GM12878 (cell line): ENCODE measurements at regions of chr11 and their contacts with region 1.

Region 1: DNA sequence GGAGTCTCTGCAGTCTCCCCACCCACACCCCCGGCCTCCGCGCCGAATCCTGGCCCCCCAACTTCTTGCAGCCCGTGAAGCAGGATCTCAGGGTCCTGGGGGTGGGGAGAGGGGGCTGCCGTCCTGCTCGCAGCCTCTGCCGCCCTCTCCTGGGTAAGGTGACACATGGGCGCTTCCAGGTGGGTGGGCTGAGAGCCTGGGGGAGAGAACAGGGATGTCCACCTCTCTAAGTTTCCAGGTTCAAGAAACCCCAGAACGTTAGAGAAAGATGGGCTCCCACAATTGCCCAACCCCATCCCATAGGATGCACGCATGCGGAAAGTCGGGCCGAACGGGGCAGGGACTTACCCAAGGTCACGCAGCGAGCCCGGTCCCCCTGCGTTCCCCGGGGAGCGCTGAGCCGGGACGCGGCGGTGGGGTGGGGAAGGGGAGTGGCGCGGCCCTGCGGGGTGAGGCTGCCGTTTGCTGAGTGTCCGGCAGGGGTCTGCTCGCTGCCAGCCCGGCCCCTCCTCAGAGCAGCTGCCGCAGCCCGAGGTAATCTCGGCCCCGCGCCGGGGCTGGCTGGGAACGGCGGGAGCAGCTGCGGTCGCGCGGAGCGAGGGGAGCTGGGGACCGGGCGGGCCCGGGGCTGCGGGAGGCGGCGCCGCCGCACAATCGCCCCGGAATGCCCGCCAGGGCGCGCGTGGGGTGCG is 705 bp upstream of the CAPN1 start:
- DNase-seq: peak; percentile 19
- ATAC-seq: peak; percentile 88
- H3K4me3 ChIP-seq: peak overlapping the region; percentile 100
- H3K27ac ChIP-seq: peak overlapping the region; percentile 93
- H3K4me1 ChIP-seq: peaks cover 6% of the 10 kb centered on the region; the same call in 1 of the 2 replicates
- H3K27me3 ChIP-seq: no peaks in the 10 kb centered on the region
- CTCF ChIP-seq: peak; percentile 66 to 83 (median 72)
- EP300 ChIP-seq: no peak
- POLR2A ChIP-seq: no peak
- RAD21 ChIP-seq: peak; percentile 87

Region 2: DNA sequence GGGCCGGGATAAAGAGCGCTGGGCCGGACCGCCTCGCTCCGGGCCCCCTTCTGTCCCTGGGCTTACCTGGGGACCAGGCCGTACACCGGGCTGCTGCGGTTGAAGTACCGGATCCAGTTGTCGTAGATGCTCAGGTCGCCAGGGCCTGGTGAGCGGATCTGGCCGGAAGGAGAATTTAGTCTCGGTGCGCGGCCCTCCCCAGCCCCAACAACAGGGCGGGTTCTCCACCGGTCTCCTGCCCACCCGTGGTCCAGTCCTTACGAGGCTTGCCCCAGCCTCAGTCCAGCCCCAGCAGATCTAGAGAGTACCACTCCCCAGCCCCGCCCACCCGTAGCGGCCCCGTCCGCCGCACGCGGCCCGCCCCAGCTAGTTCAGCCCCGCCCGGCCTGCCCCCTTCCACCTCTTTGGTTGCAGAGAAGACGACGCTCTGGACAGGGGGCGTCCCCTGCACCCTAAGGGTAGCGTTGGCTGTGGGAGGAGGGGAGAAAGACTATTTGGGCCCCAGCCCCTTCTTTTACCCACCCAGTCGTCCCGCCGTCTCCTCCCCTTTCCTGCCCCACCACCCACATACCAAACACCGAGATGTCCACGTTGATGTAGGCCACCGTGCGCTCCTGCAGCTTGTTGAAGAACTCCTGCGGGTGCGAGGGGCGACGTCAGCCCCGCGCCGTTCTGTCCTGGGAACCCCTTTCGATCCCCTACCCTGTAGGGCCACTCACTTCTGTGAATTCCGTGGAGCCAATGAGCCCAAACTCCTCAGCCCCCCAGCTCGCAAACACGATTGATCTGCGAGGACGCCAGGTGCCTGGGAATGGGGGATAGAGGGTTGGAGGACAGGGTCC is 133.2 kb before region 1 on chr11:
- CTCF ChIA-PET with region 1: no interaction called
- POLR2A ChIA-PET with region 1: no interaction called
- RAD21 ChIA-PET with region 1: no interaction called
- SMC1A ChIA-PET with region 1: no interaction called
- in situ Hi-C with region 1: no loop called
- intact Hi-C with region 1: no loop called
- DNase-seq: no peak
- ATAC-seq: no peak
- H3K4me3 ChIP-seq: no peak overlapping the region
- H3K27ac ChIP-seq: no peak overlapping the region
- H3K4me1 ChIP-seq: peaks cover 11% of the 10 kb centered on the region
- H3K27me3 ChIP-seq: no peaks in the 10 kb centered on the region
- CTCF ChIP-seq: no peak
- EP300 ChIP-seq: no peak
- POLR2A ChIP-seq: no peak
- RAD21 ChIP-seq: no peak

Region 3: GRCh38 chr11:65134386-65135253 is 46.4 kb before region 1 on chr11 and contains the start of gene SYVN1:
- CTCF ChIA-PET with region 1: interaction called, 35 read pairs
- POLR2A ChIA-PET with region 1: interaction called, 8 read pairs
- RAD21 ChIA-PET with region 1: interaction called, 25 read pairs
- SMC1A ChIA-PET with region 1: interaction called, 6 read pairs
- in situ Hi-C with region 1: no loop called
- intact Hi-C with region 1: loop called (anchors 5 kb)
- DNase-seq: peak; percentile 89
- ATAC-seq: peak; percentile 91
- H3K4me3 ChIP-seq: peak within 1 kb of the TSS; percentile 99
- H3K27ac ChIP-seq: peak within 1 kb of the TSS; percentile 99
- H3K4me1 ChIP-seq: peaks cover 21% of the 10 kb centered on the region
- H3K27me3 ChIP-seq: no peaks in the 10 kb centered on the region
- CTCF ChIP-seq: 0 out of 6 replicates have a peak, but pooled peaks of 1 of the 3 experiments have one; percentile 1
- EP300 ChIP-seq: 0 out of 4 replicates have a peak, but pooled peaks of 1 of the 2 experiments have one; percentile 35
- POLR2A ChIP-seq: peak; percentile 97
- RAD21 ChIP-seq: no peak
- polyA plus RNA-seq, gene SYVN1: 0.79 to 2.6 TPM

Region 4: GRCh38 chr11:65194564-65194963 is 13.5 kb after region 1 on chr11:
- CTCF ChIA-PET with region 1: interaction called, 10 read pairs
- POLR2A ChIA-PET with region 1: no interaction called
- RAD21 ChIA-PET with region 1: no interaction called
- SMC1A ChIA-PET with region 1: interaction called, 4 read pairs
- in situ Hi-C with region 1: no loop called
- intact Hi-C with region 1: no loop called
- DNase-seq: no peak
- ATAC-seq: no peak
- H3K4me3 ChIP-seq: no peak overlapping the region
- H3K27ac ChIP-seq: no peak overlapping the region
- H3K4me1 ChIP-seq: no peaks in the 10 kb centered on the region
- H3K27me3 ChIP-seq: no peaks in the 10 kb centered on the region
- CTCF ChIP-seq: no peak
- EP300 ChIP-seq: no peak
- POLR2A ChIP-seq: no peak
- RAD21 ChIP-seq: no peak

Region 5: DNA sequence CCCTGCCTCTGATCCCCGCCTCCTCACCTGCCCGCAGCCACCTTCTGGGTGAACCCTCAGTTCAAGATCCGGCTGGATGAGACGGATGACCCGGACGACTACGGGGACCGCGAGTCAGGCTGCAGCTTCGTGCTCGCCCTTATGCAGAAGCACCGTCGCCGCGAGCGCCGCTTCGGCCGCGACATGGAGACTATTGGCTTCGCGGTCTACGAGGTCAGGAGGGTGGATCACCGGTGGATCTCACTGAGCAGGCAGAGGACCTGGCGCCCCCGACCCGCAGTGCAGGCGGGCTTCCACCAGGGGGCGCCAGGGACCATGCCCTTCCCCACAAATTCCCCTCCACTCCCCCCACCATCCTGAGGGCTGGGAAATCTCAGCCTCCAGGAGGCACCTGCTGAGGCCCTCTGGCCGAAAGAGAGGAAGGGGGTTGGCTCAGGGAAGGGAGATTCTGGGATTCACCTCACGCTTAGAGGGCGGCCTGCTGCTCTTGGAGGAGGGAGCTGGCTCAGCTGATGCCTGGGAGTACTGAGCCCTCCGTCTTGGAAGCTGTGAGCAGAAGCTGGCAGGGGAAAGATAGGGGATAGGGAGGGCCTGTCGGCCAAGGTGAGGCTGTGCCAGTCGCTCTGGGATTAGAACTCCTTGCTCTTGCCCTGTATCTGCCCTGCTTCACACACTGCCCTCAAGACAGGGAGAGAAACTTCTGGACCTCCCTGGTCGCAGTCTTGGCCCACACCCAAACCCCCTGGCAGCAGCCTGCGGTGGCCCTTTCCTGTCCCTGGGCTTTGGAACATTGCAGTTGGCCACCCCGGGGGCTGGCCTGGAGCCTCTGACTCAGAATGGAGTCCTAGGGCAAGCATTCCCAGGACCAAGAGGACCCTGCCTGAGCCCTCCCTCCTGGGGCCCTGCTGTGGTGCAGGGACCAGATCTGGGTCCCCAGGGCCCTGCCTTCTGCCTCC is 23.9 kb after region 1 on chr11:
- CTCF ChIA-PET with region 1: no interaction called
- POLR2A ChIA-PET with region 1: no interaction called
- RAD21 ChIA-PET with region 1: no interaction called
- SMC1A ChIA-PET with region 1: no interaction called
- in situ Hi-C with region 1: no loop called
- intact Hi-C with region 1: no loop called
- DNase-seq: no peak
- ATAC-seq: peak; percentile 90
- H3K4me3 ChIP-seq: no peak overlapping the region
- H3K27ac ChIP-seq: no peak overlapping the region
- H3K4me1 ChIP-seq: no peaks in the 10 kb centered on the region
- H3K27me3 ChIP-seq: no peaks in the 10 kb centered on the region
- CTCF ChIP-seq: peak; percentile 73 to 96 (median 81)
- EP300 ChIP-seq: no peak
- POLR2A ChIP-seq: no peak; the same call in 1 of the 2 replicates
- RAD21 ChIP-seq: peak; percentile 60

Region 6: DNA sequence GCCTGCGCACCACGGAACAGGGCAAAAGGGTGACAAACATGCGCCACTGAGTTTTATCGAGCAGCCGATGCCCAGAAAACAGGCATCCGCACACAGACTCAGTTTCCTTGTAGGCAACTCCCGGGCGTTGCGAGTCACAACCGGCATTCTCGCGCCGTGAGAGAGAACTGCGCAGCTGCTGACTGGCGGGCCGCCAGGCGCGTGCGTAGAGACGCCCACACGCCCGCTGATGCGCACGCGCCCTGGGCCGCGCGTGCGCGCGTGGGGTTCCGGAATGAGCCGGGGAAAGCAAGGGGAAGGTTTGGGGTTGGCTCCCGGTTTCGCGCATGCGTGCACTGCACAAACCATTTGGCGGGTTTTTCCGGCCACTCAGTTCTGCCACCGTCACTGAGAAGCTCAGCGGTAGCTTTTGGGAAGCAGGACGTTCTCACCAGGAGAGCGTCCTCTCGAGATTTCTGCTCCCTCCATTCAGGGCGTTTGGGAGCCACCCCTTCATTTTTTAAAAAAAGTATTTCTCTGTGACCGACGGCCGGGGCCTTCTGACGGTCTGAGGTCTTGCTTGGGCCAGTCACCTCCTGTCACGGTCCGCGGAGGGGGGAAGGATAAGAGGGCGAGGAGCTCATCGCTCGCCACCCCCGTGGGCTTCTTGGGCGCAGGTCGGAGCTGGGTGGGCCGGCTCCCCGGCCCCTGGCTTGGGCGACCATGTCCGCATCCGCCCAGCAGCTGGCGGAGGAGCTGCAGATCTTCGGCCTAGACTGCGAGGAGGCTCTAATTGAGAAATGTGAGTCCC is 80.8 kb after region 1 on chr11 and contains the start of gene POLA2:
- CTCF ChIA-PET with region 1: interaction called, 3 read pairs
- POLR2A ChIA-PET with region 1: no interaction called
- RAD21 ChIA-PET with region 1: interaction called, 12 read pairs
- SMC1A ChIA-PET with region 1: no interaction called
- in situ Hi-C with region 1: no loop called
- intact Hi-C with region 1: no loop called
- DNase-seq: peak; percentile 92
- ATAC-seq: peak; percentile 93
- H3K4me3 ChIP-seq: peak within 1 kb of the TSS; percentile 92
- H3K27ac ChIP-seq: peak within 1 kb of the TSS; percentile 98
- H3K4me1 ChIP-seq: peaks cover 3% of the 10 kb centered on the region
- H3K27me3 ChIP-seq: no peaks in the 10 kb centered on the region
- CTCF ChIP-seq: no peak
- EP300 ChIP-seq: no peak
- POLR2A ChIP-seq: peak; percentile 94
- RAD21 ChIP-seq: no peak
- polyA plus RNA-seq, gene POLA2: 4.2 to 8.7 TPM

Region 7: DNA sequence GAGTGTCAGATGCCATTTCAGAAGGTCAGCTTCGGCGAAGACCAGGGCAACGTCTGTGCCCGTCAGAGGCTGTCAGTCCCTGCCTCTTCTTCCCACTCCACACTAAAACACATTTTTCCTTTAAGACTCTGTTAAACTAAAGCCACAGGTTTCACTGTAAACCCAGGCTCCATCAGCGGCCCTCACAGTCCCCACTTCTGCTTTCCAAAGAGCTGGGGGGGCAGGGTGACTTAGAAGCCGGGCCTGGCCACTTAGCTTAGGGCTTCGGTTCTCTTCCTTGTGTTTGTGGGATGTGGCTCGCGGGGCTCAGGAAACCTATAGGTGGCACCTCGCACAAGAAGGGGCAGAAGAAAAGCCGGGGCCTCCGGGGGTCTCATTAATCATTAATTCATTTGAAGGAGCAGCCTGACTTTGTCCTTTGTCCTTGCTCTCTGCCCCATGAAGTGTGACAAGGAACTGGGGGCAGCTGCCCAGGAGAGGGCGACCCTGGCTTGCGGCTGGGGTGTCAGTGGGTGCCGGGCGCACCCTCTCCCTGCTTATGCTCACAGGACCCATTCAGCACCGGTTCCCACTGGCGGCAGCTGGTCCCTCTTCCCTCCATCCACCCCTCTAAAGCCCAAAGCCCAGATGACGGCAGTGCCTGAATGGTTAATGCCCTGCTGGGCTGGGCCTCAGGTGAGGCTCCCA is 197.3 kb after region 1 on chr11:
- CTCF ChIA-PET with region 1: no interaction called
- POLR2A ChIA-PET with region 1: no interaction called
- RAD21 ChIA-PET with region 1: no interaction called
- SMC1A ChIA-PET with region 1: no interaction called
- in situ Hi-C with region 1: no loop called
- intact Hi-C with region 1: no loop called
- DNase-seq: no peak
- ATAC-seq: peak; percentile 34
- H3K4me3 ChIP-seq: no peak overlapping the region
- H3K27ac ChIP-seq: peak overlapping the region; percentile 42; the same call in 1 of the 2 replicates
- H3K4me1 ChIP-seq: peaks cover 36% of the 10 kb centered on the region
- H3K27me3 ChIP-seq: no peaks in the 10 kb centered on the region
- CTCF ChIP-seq: peak in 2 of 3 experiments; percentile 12 to 18; a peak in 1 of 6 replicates
- EP300 ChIP-seq: no peak
- POLR2A ChIP-seq: no peak
- RAD21 ChIP-seq: peak; percentile 31; the same call in 1 of the 2 replicates